ENCODE measurements at regions of chr5 and their contacts with region 1.

Region 1: DNA sequence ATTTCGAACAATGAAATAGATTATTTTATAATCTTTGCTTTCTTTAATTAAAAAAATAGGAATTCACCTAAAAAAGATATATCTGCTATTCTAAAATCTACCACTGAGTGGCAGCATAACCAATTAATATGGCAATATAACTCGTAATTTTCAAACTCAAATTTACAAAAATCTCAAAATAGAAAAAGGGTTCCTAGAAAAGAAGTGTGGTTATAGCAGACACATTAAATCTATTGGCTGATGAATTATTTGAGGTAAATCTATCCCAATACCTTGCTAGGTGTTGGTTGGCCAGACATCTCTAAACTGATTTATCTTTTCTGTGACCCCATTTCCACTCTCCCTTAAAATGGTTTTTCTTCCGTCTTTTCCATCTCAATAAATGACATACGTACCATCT is 30.2 kb upstream of the NRG2 start:
- DNase-seq: no peak
- ATAC-seq: no peak
- H3K4me3 ChIP-seq: no peak overlapping the region
- H3K27ac ChIP-seq: no peak overlapping the region
- H3K4me1 ChIP-seq: peaks cover 0 to 7% (median 3%) of the 10 kb centered on the region in 9 donors
- H3K27me3 ChIP-seq: peaks cover 0 to 21% (median 0%) of the 10 kb centered on the region in 7 donors
- CTCF ChIP-seq: peak; percentile 48 to 85 (median 73)

Region 2: DNA sequence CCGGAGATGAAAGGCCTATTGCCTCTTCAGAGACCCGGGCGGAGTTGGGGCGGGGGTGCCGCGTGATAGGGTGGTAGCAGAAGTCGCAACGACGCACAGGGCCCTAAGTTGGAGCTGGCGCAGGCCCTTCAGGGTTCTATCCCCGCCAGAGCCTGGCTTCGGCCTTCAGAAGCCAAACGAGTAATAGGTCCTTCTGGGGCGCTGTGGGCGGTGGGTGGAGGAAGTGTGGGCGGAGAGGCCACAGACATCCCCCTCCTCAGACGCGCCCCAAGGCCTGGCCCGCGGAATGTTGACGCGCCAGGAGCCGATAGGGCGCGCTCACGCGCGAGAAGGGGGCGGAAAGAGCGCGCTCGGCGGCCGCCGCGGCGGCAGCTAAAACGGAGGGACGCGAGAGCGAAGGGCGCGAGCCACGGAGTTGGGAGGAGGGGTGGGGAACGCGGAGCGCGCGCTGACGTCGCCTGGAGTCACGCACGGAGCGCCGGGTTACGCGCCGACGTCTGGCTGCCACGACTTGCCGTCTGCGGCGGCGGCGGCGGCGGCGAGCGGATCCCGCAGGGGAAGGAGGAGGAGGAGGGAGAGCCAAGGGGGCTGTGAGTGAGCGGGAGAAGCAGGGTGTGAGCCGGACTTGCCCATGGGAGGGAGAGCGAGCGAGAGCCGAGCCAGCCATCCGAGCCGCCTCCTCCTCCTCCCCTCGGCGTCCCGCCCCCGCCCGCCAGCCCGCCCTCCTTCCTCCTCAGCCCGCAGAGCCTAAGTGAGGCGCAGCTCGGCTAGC is 34.2 kb after region 1 on chr5:
- intact Hi-C with region 1: loop called in 2 of 10 experiments (anchors 2 to 5 kb)
- DNase-seq: peak; percentile 93 to 95
- ATAC-seq: peak; percentile 97 to 99 (median 98)
- H3K4me3 ChIP-seq: peak overlapping the region; percentile 61 to 85 (median 76)
- H3K27ac ChIP-seq: peak overlapping the region; percentile 94 to 100 (median 98)
- H3K4me1 ChIP-seq: peaks cover 0 to 53% (median 39%) of the 10 kb centered on the region in 9 donors
- H3K27me3 ChIP-seq: peaks cover 0 to 45% (median 0%) of the 10 kb centered on the region in 7 donors
- CTCF ChIP-seq: peak in 6 of 9 donors; percentile 2 to 53 (median 36)

Region 3: GRCh38 chr5:140145818-140146522 is 72.7 kb after region 1 on chr5:
- intact Hi-C with region 1: loop called in 8 of 10 experiments (anchors 1 to 5 kb)
- DNase-seq: peak; percentile 55 to 82
- ATAC-seq: peak; percentile 92 to 96 (median 94)
- H3K4me3 ChIP-seq: peak overlapping the region; percentile 30 to 62 (median 54)
- H3K27ac ChIP-seq: peak overlapping the region in 1 of 10 donors; percentile 39
- H3K4me1 ChIP-seq: peaks cover 6 to 28% (median 18%) of the 10 kb centered on the region in 9 donors
- H3K27me3 ChIP-seq: peaks cover 0 to 29% (median 0%) of the 10 kb centered on the region in 7 donors
- CTCF ChIP-seq: peak; percentile 65 to 93 (median 82)

Region 4: GRCh38 chr5:140151730-140152597 is 78.7 kb after region 1 on chr5:
- intact Hi-C with region 1: loop called in 8 of 10 experiments (anchors 1 to 5 kb)
- DNase-seq: no peak
- ATAC-seq: no peak
- H3K4me3 ChIP-seq: no peak overlapping the region
- H3K27ac ChIP-seq: no peak overlapping the region
- H3K4me1 ChIP-seq: peaks cover 0 to 19% (median 12%) of the 10 kb centered on the region in 9 donors
- H3K27me3 ChIP-seq: peaks cover 0 to 10% (median 0%) of the 10 kb centered on the region in 7 donors
- CTCF ChIP-seq: no peak

Region 5: DNA sequence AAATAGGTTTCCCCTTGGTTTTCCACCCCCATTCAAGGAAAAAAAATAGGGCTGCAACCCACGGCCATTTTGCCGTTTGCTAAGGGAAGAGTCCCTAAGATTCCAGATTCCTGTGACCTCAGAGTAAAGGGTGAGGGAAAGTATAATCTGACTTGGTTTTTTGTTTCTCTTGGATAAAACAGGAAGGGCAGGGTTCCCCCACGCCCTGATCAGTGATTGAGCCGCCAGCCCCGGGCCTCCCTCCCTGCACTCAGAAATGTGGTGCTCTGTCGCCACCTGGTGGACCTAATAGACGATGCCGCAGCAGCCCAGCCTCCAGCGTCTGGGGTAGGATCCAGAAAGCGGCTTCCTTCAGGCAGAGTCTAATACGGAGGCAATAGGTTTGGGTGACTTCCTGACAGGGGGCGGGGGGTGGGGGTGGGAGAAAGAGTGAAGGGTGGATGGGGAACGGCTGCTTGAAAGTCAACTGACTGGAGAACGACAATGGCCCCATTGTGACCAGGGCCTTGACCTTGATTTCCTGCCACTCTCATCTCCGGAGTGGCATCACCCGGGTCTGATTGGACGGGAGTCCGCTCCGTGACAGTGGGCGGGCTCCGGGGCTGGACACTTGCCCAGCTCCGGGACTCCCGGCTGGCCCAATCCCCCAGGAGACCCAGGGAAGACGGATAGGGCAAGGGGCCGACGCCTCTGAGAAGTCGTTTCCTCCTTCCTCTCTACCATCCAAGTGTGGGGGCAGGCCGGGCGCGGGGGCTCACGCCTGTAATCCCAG is 83.9 kb after region 1 on chr5:
- intact Hi-C with region 1: loop called in 8 of 10 experiments (anchors 1 to 5 kb)
- DNase-seq: peak; percentile 91
- ATAC-seq: peak; percentile 94 to 97 (median 96)
- H3K4me3 ChIP-seq: peak overlapping the region in 9 of 10 donors; percentile 27 to 58 (median 44)
- H3K27ac ChIP-seq: peak overlapping the region in 9 of 10 donors; percentile 39 to 74 (median 70)
- H3K4me1 ChIP-seq: peaks cover 0 to 22% (median 13%) of the 10 kb centered on the region in 9 donors
- H3K27me3 ChIP-seq: no peaks in the 10 kb centered on the region
- CTCF ChIP-seq: peak; percentile 87 to 93 (median 90)

Region 6: DNA sequence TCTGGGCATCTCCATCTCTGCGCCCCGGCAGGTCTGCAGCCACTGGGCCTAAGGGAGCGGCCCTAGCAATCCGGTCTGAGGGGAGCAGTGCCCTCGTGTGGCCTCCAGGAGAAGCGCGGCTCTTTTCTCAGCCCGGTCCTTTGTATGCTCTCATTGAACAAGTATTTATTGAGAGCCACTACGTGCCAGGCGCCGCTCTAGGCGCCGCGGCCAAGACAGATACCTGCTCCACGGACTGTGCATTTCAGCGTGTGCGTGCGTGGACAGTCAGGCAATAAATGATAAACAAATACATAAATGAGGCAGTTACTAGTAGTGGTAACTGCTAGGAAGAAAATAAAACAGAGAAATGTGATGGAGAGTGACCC is 284.4 kb after region 1 on chr5:
- intact Hi-C with region 1: loop called in 1 of 10 experiments (anchors 10 kb)
- DNase-seq: peak; percentile 78
- ATAC-seq: peak; percentile 86 to 94 (median 92)
- H3K4me3 ChIP-seq: peak overlapping the region in 5 of 10 donors; percentile 7 to 41 (median 31)
- H3K27ac ChIP-seq: no peak overlapping the region
- H3K4me1 ChIP-seq: peaks cover 0 to 16% (median 10%) of the 10 kb centered on the region in 9 donors
- H3K27me3 ChIP-seq: no peaks in the 10 kb centered on the region
- CTCF ChIP-seq: peak; percentile 81 to 96 (median 91)

Measured in heart right ventricle (tissue), 16 donors.